ENCODE measurements at regions of chr19 and their contacts with region 1.

Region 1: GRCh38 chr19:45478454-45479238 is 10.8 kb downstream of the FOSB start:
- DNase-seq: peak; percentile 90
- ATAC-seq: peak; percentile 88
- H3K4me3 ChIP-seq: peak overlapping the region; percentile 68
- H3K27ac ChIP-seq: peak overlapping the region; percentile 93
- H3K4me1 ChIP-seq: no peaks in the 10 kb centered on the region
- H3K27me3 ChIP-seq: no peaks in the 10 kb centered on the region
- CTCF ChIP-seq: peak; percentile 84

Region 2: GRCh38 chr19:45370410-45371204 is 108.0 kb before region 1 on chr19 and contains the start of gene ERCC2:
- CTCF ChIA-PET with region 1: no interaction called
- POLR2A ChIA-PET with region 1: no interaction called
- intact Hi-C with region 1: no loop called
- DNase-seq: peak; percentile 98
- ATAC-seq: peak; percentile 98
- H3K4me3 ChIP-seq: peak within 1 kb of the TSS; percentile 94
- H3K27ac ChIP-seq: peak within 1 kb of the TSS; percentile 30; the same call in 1 of the 2 replicates
- H3K4me1 ChIP-seq: peaks cover 7% of the 10 kb centered on the region
- H3K27me3 ChIP-seq: no peaks in the 10 kb centered on the region
- CTCF ChIP-seq: no peak
- total RNA-seq, gene ERCC2: 48.0 and 57.5 TPM in 2 replicates

Region 3: DNA sequence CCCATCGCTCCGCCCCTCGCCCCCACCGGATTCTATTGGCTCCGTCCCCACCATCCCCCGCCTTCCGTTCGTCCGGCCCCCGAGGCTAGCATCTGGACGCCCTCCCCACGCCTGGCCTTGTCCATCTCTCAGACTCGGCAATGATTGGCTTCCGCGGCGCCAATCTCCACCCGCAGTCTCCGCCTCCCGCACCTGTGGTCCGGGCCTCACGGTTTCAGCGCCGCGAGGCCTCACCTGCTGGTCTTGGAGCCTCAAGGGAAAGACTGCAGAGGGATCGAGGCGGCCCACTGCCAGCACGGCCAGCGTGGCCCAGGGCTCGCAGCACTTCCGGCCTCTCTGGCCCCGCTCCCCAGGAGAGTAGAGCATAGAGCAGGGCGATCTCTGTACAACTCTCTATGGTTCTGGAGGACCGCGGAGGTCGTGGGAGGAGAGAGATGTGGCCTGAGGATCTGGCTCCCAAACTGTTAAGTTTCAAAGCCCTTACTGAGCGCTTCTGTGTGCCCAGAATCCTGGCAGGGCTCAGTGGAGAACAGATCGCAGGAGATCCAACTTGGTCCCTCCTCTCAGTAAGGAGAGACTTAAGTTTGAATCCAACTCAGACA is 55.0 kb before region 1 on chr19 and contains the start of gene ERCC1:
- CTCF ChIA-PET with region 1: no interaction called
- POLR2A ChIA-PET with region 1: no interaction called
- intact Hi-C with region 1: loop called (anchors 1 kb)
- DNase-seq: peak; percentile 93
- ATAC-seq: peak; percentile 78
- H3K4me3 ChIP-seq: peak within 1 kb of the TSS; percentile 69
- H3K27ac ChIP-seq: peak within 1 kb of the TSS; percentile 97
- H3K4me1 ChIP-seq: peaks cover 25% of the 10 kb centered on the region
- H3K27me3 ChIP-seq: no peaks in the 10 kb centered on the region
- CTCF ChIP-seq: no peak
- total RNA-seq, gene ERCC1: 56.2 and 57.3 TPM in 2 replicates

Region 4: GRCh38 chr19:45506246-45506990 is 27.8 kb after region 1 on chr19:
- CTCF ChIA-PET with region 1: no interaction called
- POLR2A ChIA-PET with region 1: no interaction called
- intact Hi-C with region 1: no loop called
- DNase-seq: peak; percentile 86
- ATAC-seq: peak; percentile 70
- H3K4me3 ChIP-seq: peak overlapping the region; percentile 99
- H3K27ac ChIP-seq: peak overlapping the region; percentile 79
- H3K4me1 ChIP-seq: peaks cover 21% of the 10 kb centered on the region
- H3K27me3 ChIP-seq: no peaks in the 10 kb centered on the region
- CTCF ChIP-seq: peak; percentile 67

Measured in PC-3 (cell line).